K562 (cell line): ENCODE measurements at regions of chr9 and their contacts with region 1.

Region 1: DNA sequence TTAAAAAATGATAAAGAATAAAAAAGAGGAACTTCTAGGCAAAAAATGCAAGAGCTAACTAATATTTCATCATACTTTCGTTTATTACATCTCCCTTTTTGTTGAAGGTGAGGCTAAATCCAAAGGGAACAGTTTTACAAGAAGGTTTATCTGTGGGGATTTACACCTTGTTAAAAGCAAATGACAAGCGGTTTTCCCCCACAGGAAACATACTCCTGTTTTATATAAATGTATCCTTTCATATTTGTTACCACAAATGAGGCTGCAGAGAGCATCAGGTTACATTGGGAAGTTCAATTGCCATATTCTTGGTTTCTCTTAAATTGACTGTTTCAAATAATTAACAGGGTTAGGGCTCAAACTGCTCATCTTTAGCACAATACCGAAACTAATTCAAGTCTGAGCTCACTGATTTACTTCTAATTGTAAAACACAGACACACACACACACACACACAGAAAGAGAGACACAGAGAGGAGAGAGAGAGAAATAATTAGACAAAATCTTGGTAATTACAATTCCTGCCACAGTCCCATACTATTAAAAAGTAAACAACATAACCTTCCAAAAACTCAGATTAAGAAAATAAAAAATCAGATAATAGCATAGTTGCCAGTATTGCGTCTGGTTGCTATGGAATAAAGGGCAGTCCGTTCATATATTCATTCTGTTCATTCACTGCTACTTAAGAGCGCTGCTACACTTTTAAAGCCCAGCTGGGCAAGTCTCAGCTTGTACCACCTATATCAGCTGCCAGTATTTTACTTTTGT is 17.1 kb downstream of the RFX3 start:
- DNase-seq: no peak
- ATAC-seq: peak; percentile 69
- H3K4me3 ChIP-seq: peak overlapping the region; percentile 21; the same call in 1 of the 2 replicates
- H3K27ac ChIP-seq: peak overlapping the region; percentile 90
- H3K4me1 ChIP-seq: peaks cover 7 to 11% of the 10 kb centered on the region in 2 experiments; a peak in 4 of 5 replicates
- H3K27me3 ChIP-seq: no peaks in the 10 kb centered on the region
- CTCF ChIP-seq: no peak
- EP300 ChIP-seq: no peak
- POLR2A ChIP-seq: no peak
- RAD21 ChIP-seq: no peak

Region 2: GRCh38 chr9:3525836-3526164 is 17.1 kb after region 1 on chr9 and contains the start of gene RFX3:
- CTCF ChIA-PET with region 1: no interaction called
- POLR2A ChIA-PET with region 1: interaction called, 14 read pairs
- in situ Hi-C with region 1: no loop called
- intact Hi-C with region 1: loop called (anchors 1 kb)
- DNase-seq: peak; percentile 75 to 90 (median 81)
- ATAC-seq: peak; percentile 64
- H3K4me3 ChIP-seq: peak within 1 kb of the TSS; percentile 82
- H3K27ac ChIP-seq: peak within 1 kb of the TSS; percentile 100
- H3K4me1 ChIP-seq: peaks cover under 1 to 4% of the 10 kb centered on the region in 2 experiments; a peak in 1 of 5 replicates
- H3K27me3 ChIP-seq: no peaks in the 10 kb centered on the region
- CTCF ChIP-seq: no peak
- EP300 ChIP-seq: no peak
- POLR2A ChIP-seq: no peak
- RAD21 ChIP-seq: no peak
- polyA plus RNA-seq, gene RFX3: 1.4 TPM